ENCODE measurements at regions of chr12 and their contacts with region 1.

Region 1: DNA sequence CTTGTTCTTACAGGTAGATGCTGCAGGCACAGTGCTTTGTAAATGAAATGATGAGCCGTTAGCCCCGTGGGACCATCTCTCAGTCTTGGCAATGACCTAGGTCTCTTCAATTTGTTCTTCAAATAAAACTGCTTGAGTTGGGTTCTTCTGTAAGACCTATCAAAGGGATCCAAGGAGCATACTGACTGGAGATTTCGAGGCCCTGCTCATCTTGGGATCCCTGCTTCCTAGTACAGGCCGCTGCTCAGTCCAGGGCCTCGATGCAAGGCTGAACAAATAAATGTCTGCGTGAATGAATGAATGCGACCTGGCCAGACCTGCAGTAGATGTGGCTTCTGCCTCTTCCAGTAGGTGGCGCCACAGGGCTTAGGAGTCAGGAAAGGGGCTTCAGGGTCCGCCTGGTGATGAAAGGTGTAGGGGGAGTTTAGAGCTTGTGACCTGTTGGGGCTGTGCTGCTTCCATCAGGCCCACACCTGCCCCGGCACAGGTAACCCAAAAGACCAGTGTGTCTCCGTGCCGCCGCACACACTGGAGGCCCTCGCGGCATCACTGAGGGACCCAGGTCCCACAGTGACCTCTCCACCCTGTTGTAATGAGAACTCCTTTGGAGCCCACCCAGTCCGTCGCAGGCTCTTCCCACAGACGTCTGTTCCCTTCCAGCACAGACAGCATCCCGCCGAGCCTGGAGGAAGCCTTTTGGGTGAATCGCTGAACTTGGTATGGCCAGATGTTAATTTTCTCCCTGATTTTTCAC is 4.4 kb downstream of the CACNA1C start:
- H3K4me3 Mint-ChIP-seq: no peak overlapping the region
- H3K27ac Mint-ChIP-seq: no peak overlapping the region
- H3K4me1 Mint-ChIP-seq: peaks cover 9% of the 10 kb centered on the region
- H3K27me3 Mint-ChIP-seq: peaks cover 41% of the 10 kb centered on the region

Region 2: GRCh38 chr12:1916371-1917171 is 140.6 kb before region 1 on chr12:
- intact Hi-C with region 1: no loop called
- H3K4me3 Mint-ChIP-seq: no peak overlapping the region
- H3K27ac Mint-ChIP-seq: peak overlapping the region; percentile 29
- H3K4me1 Mint-ChIP-seq: peaks cover 53% of the 10 kb centered on the region
- H3K27me3 Mint-ChIP-seq: peaks cover 10% of the 10 kb centered on the region

Region 3: GRCh38 chr12:1978078-1978862 is 78.9 kb before region 1 on chr12:
- intact Hi-C with region 1: no loop called
- H3K4me3 Mint-ChIP-seq: no peak overlapping the region
- H3K27ac Mint-ChIP-seq: no peak overlapping the region
- H3K4me1 Mint-ChIP-seq: no peaks in the 10 kb centered on the region
- H3K27me3 Mint-ChIP-seq: no peaks in the 10 kb centered on the region

Region 4: GRCh38 chr12:2003676-2004112 is 53.5 kb before region 1 on chr12:
- intact Hi-C with region 1: no loop called
- H3K4me3 Mint-ChIP-seq: peak overlapping the region; percentile 100
- H3K27ac Mint-ChIP-seq: peak overlapping the region; percentile 98
- H3K4me1 Mint-ChIP-seq: peaks cover 16% of the 10 kb centered on the region
- H3K27me3 Mint-ChIP-seq: no peaks in the 10 kb centered on the region

Region 5: DNA sequence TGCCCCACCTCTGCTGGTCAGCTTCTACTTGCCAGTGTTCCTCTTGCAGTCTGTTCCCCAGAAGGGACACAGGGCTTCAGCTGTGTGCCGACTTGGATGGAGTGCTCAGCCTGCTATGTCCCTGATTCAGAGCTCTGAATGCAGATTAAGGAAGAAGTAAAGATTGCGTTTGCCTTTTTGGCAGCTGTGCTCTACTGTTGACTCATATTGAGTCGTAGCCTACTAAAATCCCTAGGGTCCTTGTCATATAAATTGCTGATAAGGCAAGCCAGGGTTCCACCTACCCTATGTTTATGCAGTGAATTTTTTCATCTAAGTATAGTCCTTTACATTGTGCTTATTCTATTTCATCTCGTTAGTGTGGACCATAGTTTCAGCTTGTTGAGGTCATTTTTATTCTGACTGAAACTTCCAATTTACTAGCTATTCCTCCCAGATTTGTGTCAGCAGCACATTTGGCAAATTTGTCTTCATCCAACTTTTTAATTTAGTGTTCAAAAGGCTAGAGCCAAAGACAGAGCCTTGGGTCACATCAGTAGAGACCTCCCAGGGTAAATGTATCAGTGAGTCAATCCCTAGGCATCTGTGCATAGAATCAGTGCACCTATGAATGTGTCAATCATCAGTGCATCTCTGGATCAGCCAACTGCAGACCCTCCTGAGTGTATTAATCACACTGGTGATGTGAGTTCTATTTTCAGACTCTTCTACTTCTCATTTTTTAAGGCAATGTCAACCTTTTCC is 27.5 kb after region 1 on chr12:
- intact Hi-C with region 1: no loop called
- H3K4me3 Mint-ChIP-seq: no peak overlapping the region
- H3K27ac Mint-ChIP-seq: no peak overlapping the region
- H3K4me1 Mint-ChIP-seq: no peaks in the 10 kb centered on the region
- H3K27me3 Mint-ChIP-seq: peaks cover 2% of the 10 kb centered on the region

Region 6: DNA sequence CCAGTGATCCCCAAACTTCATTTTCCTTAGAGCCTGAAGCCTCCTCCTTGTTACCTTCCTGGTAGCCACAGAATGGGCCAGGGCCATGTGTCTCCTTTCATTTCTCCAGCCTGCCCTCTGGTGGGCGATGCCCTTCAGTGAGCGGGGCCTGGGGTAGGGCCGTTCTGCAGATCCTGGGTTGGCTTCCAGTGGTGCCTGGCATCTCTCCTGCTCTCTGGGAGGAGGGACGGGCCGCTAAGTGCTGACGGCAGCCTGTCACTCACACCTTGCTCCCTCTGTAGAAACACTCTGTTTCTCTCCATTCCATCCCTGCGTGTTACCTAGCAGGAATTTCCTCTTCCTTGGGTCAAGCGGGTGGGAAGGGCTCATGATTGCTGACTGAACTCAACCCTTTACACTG is 227.6 kb after region 1 on chr12:
- intact Hi-C with region 1: loop called (anchors 5 kb)
- H3K4me3 Mint-ChIP-seq: no peak overlapping the region
- H3K27ac Mint-ChIP-seq: peak overlapping the region; percentile 78
- H3K4me1 Mint-ChIP-seq: peaks cover 60% of the 10 kb centered on the region
- H3K27me3 Mint-ChIP-seq: peaks cover 4% of the 10 kb centered on the region

Region 7: DNA sequence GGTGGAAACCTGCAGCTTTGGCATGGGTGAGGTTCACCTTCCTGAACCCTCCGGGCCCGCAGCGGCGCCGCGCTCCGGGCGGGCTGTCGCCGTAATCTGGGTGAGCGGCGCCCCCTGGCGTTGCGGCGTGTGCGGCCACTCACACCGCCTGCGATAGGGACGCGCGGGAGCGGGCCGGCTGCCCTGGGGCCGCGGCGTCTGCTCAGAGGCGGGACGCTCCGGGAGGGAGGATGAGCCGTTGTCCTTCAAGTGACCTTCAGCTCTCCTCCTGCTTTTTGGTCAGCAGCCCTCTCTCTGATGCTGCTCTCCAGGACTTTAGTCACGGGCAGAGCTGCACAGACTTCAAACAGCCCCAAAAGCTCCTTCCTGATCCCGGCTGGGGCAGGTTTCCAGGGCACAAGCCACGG is 525.9 kb after region 1 on chr12:
- intact Hi-C with region 1: loop called (anchors 1 kb)
- H3K4me3 Mint-ChIP-seq: no peak overlapping the region
- H3K27ac Mint-ChIP-seq: no peak overlapping the region
- H3K4me1 Mint-ChIP-seq: no peaks in the 10 kb centered on the region
- H3K27me3 Mint-ChIP-seq: peaks cover 43% of the 10 kb centered on the region